ENCODE measurements at regions of chr9 and their contacts with region 1.

Region 1: GRCh38 chr9:35882263-35882848 is 12.2 kb upstream of the OR13J1 start:
- DNase-seq: peak; percentile 81
- ATAC-seq: peak; percentile 61
- H3K4me3 Mint-ChIP-seq: no peak overlapping the region
- H3K27ac Mint-ChIP-seq: no peak overlapping the region
- H3K4me1 Mint-ChIP-seq: no peaks in the 10 kb centered on the region
- H3K27me3 Mint-ChIP-seq: peaks cover 28% of the 10 kb centered on the region

Region 2: GRCh38 chr9:35616681-35617459 is 265.5 kb before region 1 on chr9:
- CTCF ChIA-PET with region 1: no interaction called
- DNase-seq: peak; percentile 88
- ATAC-seq: peak; percentile 72
- H3K4me3 Mint-ChIP-seq: peak overlapping the region; percentile 78
- H3K27ac Mint-ChIP-seq: peak overlapping the region; percentile 80
- H3K4me1 Mint-ChIP-seq: peaks cover 51% of the 10 kb centered on the region
- H3K27me3 Mint-ChIP-seq: no peaks in the 10 kb centered on the region

Region 3: DNA sequence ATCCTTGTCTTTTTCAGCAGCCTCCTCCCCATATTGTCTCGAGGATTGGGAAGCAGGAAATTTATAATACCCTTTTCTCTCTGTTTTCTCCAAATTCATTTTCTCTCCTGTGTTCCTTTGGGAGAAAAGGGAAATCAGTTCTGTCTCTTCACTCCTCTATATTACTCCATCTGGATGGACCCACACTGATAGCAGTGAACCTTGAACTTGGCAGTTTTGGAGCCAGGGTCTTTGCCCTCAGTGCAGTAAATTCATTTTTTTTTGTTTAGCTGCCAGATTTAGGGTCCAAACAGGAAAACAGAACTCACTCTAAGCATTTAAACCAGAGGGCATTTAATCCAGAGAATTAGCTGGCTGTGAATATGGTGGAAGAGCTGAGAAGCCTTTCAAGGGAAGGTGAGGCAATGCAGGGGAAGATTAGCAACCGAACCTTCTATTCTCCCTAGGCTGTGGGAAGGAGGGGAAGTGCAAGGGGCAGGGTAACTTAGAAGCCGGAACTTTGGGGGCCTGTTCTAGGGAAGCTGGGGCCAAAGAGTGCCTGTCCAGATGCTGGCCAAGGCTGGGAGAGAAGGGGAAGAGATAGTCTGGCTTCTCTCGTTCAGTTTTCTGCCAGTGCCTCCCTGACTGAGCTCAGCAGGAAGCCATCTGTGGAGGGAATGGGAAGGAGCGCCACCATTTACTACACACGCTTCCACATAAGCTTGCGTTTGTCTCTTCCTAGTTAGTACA is 107.3 kb before region 1 on chr9:
- CTCF ChIA-PET with region 1: interaction called, 12 read pairs
- DNase-seq: no peak
- ATAC-seq: no peak
- H3K4me3 Mint-ChIP-seq: no peak overlapping the region
- H3K27ac Mint-ChIP-seq: peak overlapping the region; percentile 41
- H3K4me1 Mint-ChIP-seq: peaks cover 2% of the 10 kb centered on the region
- H3K27me3 Mint-ChIP-seq: no peaks in the 10 kb centered on the region

Region 4: GRCh38 chr9:35790385-35791296 is 91.7 kb before region 1 on chr9:
- CTCF ChIA-PET with region 1: interaction called, 76 read pairs
- DNase-seq: peak; percentile 69
- ATAC-seq: peak; percentile 89
- H3K4me3 Mint-ChIP-seq: no peak overlapping the region
- H3K27ac Mint-ChIP-seq: no peak overlapping the region
- H3K4me1 Mint-ChIP-seq: peaks cover 11% of the 10 kb centered on the region
- H3K27me3 Mint-ChIP-seq: no peaks in the 10 kb centered on the region

Region 5: GRCh38 chr9:35829084-35829763 is 53.1 kb before region 1 on chr9 and contains the start of gene TMEM8B:
- CTCF ChIA-PET with region 1: interaction called, 23 read pairs
- DNase-seq: peak; percentile 96
- ATAC-seq: peak; percentile 95
- H3K4me3 Mint-ChIP-seq: peak within 1 kb of the TSS; percentile 87
- H3K27ac Mint-ChIP-seq: peak within 1 kb of the TSS; percentile 85
- H3K4me1 Mint-ChIP-seq: peaks cover 19% of the 10 kb centered on the region
- H3K27me3 Mint-ChIP-seq: peaks cover 4% of the 10 kb centered on the region
- total RNA-seq, gene TMEM8B: 1.2 to 3.5 TPM

Region 6: GRCh38 chr9:35869621-35870216 is 12.6 kb before region 1 on chr9:
- CTCF ChIA-PET with region 1: interaction called, 11 read pairs
- DNase-seq: no peak
- ATAC-seq: no peak
- H3K4me3 Mint-ChIP-seq: no peak overlapping the region
- H3K27ac Mint-ChIP-seq: no peak overlapping the region
- H3K4me1 Mint-ChIP-seq: no peaks in the 10 kb centered on the region
- H3K27me3 Mint-ChIP-seq: peaks cover 2% of the 10 kb centered on the region